WTC11 (cell line): ENCODE measurements at regions of chr19 and their contacts with region 1.

Region 1: DNA sequence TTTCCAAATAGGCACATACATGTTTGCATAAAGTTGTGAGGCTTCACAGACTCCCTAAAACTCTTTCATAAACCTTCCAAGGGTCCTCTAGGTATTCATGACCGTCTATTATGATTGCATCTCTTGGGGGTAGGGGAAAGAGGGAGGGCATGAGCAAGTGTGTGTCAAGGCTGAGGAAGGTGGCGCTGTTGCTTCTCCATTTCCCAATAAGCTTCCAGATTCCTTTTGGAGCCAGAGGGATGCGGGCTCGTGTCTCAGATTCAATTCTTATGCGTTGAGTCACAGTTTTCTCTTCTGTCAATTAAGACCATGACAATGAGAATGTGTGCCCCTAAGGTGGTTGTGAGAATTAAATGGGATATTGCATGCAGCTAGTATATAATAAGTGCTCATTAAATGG is 51.0 kb upstream of the CYP2A7 start:
- DNase-seq: peak; percentile 58
- ATAC-seq: peak; percentile 72
- H3K4me3 Mint-ChIP-seq: no peak overlapping the region
- H3K27ac Mint-ChIP-seq: no peak overlapping the region
- H3K4me1 Mint-ChIP-seq: peaks cover 10% of the 10 kb centered on the region
- H3K27me3 Mint-ChIP-seq: peaks cover 5% of the 10 kb centered on the region; the same call in 1 of the 2 replicates
- CTCF ChIP-seq: no peak

Region 2: GRCh38 chr19:40813182-40813958 is 119.7 kb before region 1 on chr19:
- CTCF ChIA-PET with region 1: interaction called, 10 read pairs
- POLR2A ChIA-PET with region 1: no interaction called
- DNase-seq: no peak
- ATAC-seq: no peak
- H3K4me3 Mint-ChIP-seq: peak overlapping the region; percentile 89
- H3K27ac Mint-ChIP-seq: peak overlapping the region; percentile 61; the same call in 1 of the 2 replicates
- H3K4me1 Mint-ChIP-seq: peaks cover 31% of the 10 kb centered on the region
- H3K27me3 Mint-ChIP-seq: peaks cover 51% of the 10 kb centered on the region
- CTCF ChIP-seq: no peak